ENCODE measurements at regions of chr15 and their contacts with region 1.

Region 1: DNA sequence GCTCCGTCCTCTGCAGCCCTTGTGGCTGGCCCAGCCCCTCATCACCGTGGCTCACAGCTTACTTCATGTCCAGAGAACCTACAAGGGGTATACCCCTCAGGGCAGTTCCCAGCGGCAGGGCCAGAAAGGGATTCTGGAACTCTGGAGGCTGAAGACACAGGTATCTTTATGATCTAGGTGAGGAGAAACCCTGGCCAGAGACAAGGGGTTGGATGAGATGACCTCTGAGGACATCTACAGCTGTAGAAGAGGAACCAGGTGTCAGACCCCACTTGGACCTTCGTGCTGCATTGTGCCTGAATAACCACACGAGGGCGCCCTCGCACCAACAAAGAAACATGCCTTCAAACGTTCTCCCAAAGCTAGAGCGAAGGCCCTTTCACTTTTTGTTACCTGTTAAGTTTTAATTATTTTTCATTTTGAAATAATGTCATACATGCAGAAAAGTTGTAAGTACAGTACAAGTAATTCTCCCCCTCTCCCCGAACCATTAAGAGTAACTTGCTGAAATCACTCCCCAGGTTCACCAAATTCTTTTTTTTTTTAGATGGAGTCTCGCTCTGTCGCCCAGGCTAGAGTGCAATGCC is 118.7 kb upstream of the SMAD3 start:
- DNase-seq: peak; percentile 81 to 89
- H3K4me3 ChIP-seq: no peak overlapping the region
- H3K27ac ChIP-seq: no peak overlapping the region
- H3K4me1 ChIP-seq: peaks cover 0 to 8% (median under 1%) of the 10 kb centered on the region in 4 donors
- H3K27me3 ChIP-seq: no peaks in the 10 kb centered on the region
- CTCF ChIP-seq: peak in 5 of 7 experiments; percentile 85 to 96 (median 88)
- EP300 ChIP-seq: no peak
- POLR2A ChIP-seq: no peak

Region 2: DNA sequence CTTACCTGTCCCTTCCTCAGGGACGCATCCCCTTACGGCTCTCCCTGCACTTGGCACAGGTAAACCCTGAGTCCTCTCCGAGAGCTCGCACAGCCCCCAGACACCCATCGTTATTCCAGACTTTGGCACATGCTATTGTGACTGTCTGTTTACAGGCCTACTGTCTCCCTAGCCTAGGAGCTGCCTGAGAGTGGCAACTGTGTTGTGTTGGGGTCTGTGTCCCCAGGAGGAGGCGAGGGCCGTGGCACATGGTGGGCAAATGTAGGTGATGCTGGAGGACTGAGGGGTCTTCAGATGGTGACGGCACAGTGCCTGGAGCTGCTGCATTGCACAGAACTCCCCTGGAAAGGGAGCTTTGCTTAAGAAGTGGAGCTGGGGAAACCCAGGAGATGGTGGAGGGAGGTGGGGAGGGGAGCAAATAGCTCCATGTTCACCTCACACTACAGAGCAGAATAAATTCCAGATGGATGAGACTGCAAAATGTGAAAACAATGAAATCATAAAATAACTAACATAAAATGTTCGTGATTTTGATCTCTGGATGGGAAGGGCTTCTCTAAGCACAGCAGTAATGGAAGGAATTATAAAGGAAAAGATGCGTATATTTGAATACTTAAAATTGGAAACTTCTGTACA is 148.1 kb before region 1 on chr15:
- intact Hi-C with region 1: no loop called
- DNase-seq: no peak
- H3K4me3 ChIP-seq: no peak overlapping the region
- H3K27ac ChIP-seq: no peak overlapping the region
- H3K4me1 ChIP-seq: peaks cover 15 to 19% (median 18%) of the 10 kb centered on the region in 4 donors
- H3K27me3 ChIP-seq: no peaks in the 10 kb centered on the region
- CTCF ChIP-seq: no peak
- EP300 ChIP-seq: no peak
- POLR2A ChIP-seq: no peak

Region 3: DNA sequence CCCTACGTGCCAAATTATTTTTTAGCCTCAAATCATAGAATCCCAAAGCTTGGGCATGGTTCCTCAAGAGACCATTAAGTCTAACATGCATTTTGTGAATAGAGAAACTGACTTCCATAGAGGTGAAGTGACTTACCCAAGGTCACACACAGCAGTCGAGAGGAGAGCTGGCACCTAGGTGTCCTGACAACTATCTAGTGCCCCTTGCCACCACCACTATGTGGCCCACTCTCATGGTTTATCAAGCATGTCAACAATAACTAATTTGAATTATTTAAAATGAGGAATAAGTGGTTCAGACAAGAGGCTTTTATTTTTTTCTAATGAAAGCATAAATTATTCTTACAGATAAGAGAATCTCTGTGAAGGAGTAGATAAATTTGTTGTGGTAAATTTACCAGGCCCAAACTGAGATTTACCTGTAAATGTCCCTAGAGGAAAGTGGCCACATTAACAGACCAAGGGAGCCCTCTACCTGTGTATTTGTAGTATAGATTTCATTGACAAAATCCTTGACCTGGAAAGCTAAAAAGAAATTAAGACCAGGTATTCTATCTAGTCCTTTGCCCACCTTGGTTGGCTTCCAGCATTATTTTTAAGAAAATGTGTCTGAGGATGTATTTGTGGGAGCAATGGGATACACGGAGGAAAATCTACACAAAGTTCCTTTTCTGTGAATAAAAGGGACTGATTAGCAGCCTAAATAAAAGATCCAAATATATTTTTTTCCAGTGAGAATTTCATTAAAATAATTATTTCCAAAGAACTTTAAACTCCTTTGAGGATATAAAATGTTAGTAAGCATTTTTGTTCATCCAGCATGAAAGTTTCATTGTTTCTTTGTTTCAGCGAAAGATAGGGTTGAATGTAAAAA is 357.1 kb after region 1 on chr15:
- intact Hi-C with region 1: loop called (anchors 5 kb)
- DNase-seq: peak in 1 of 2 donors; percentile 72
- H3K4me3 ChIP-seq: no peak overlapping the region
- H3K27ac ChIP-seq: no peak overlapping the region
- H3K4me1 ChIP-seq: no peaks in the 10 kb centered on the region
- H3K27me3 ChIP-seq: no peaks in the 10 kb centered on the region
- CTCF ChIP-seq: peak in 5 of 7 experiments; percentile 14 to 71 (median 55)
- EP300 ChIP-seq: no peak
- POLR2A ChIP-seq: no peak